ENCODE measurements at regions of chr1 and their contacts with region 1.

Region 1: GRCh38 chr1:70745199-70745598 is 302.4 kb downstream of the PTGER3 start:
- DNase-seq: no peak
- H3K4me3 ChIP-seq: no peak overlapping the region
- H3K27ac ChIP-seq: no peak overlapping the region
- H3K4me1 ChIP-seq: no peaks in the 10 kb centered on the region
- H3K27me3 ChIP-seq: no peaks in the 10 kb centered on the region
- CTCF ChIP-seq: peak; percentile 1 to 69 (median 51)
- EP300 ChIP-seq: no peak
- POLR2A ChIP-seq: no peak
- RAD21 ChIP-seq: peak; percentile 60 to 68

Region 2: DNA sequence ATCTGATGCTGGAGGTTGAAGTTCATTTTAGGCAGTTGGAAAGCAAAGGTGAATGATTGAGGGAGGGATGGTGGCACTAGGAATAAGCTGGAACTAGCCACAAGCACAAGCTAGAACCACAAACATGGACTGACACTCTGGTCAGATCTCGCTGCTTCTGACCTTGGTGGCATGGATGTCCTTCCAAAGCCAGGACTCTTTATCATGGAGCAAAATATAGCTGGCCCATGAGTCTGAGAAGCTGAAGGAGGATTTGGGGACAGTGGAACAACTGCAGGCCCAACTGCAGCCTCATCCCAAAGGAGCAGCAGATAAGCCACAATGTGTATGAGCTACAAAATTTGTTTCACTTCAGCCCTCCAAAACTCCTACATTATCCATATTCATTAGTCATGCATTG is 488.5 kb before region 1 on chr1:
- CTCF ChIA-PET with region 1: no interaction called
- POLR2A ChIA-PET with region 1: no interaction called
- DNase-seq: no peak
- H3K4me3 ChIP-seq: no peak overlapping the region
- H3K27ac ChIP-seq: no peak overlapping the region
- H3K4me1 ChIP-seq: no peaks in the 10 kb centered on the region
- H3K27me3 ChIP-seq: no peaks in the 10 kb centered on the region
- CTCF ChIP-seq: no peak
- EP300 ChIP-seq: no peak
- POLR2A ChIP-seq: no peak
- RAD21 ChIP-seq: no peak

Region 3: GRCh38 chr1:70542856-70543255 is 202.3 kb before region 1 on chr1:
- CTCF ChIA-PET with region 1: no interaction called
- POLR2A ChIA-PET with region 1: no interaction called
- DNase-seq: no peak
- H3K4me3 ChIP-seq: no peak overlapping the region
- H3K27ac ChIP-seq: no peak overlapping the region
- H3K4me1 ChIP-seq: peaks cover 0 to 4% (median 2%) of the 10 kb centered on the region in 4 experiments; a peak in 1 of 7 replicates
- H3K27me3 ChIP-seq: no peaks in the 10 kb centered on the region
- CTCF ChIP-seq: no peak
- EP300 ChIP-seq: no peak
- POLR2A ChIP-seq: no peak
- RAD21 ChIP-seq: no peak

Region 4: DNA sequence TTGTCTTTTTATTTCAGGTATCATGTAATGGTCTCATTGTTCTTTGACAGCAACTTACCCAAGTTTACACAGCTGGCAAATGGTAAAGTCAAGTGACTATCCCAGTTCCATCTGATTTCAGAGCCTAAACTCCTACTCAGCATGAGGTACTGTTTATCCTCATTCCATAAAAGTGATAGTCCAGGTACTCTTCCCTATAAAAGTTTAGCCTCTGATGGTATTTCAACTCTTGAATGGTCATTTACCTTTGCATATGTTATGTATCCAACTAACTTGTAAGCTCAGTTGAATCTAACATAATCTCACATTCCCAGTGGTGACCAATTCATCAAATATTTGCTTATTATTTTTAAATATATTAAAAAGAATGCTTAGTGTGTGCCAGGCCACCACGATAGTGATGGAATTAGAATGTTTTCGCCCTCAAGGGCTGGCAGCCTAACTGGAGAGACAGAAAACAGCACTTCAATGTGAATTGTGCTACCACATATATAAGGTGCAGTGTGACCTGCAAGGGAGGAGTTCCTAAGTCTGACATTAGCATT is 27.0 kb before region 1 on chr1:
- CTCF ChIA-PET with region 1: interaction called, 13 read pairs
- POLR2A ChIA-PET with region 1: no interaction called
- DNase-seq: no peak
- H3K4me3 ChIP-seq: no peak overlapping the region
- H3K27ac ChIP-seq: no peak overlapping the region
- H3K4me1 ChIP-seq: 0 out of 7 replicates have a peak, but pooled peaks cover 0 to 2% (median 0%) of the 10 kb centered on the region in 4 experiments
- H3K27me3 ChIP-seq: no peaks in the 10 kb centered on the region
- CTCF ChIP-seq: no peak
- EP300 ChIP-seq: no peak
- POLR2A ChIP-seq: no peak
- RAD21 ChIP-seq: no peak

Region 5: GRCh38 chr1:70727886-70728489 is 17.2 kb before region 1 on chr1:
- CTCF ChIA-PET with region 1: interaction called, 21 read pairs
- POLR2A ChIA-PET with region 1: no interaction called
- DNase-seq: peak in 1 of 2 experiments; percentile 48
- H3K4me3 ChIP-seq: no peak overlapping the region
- H3K27ac ChIP-seq: no peak overlapping the region
- H3K4me1 ChIP-seq: peaks cover 0 to 7% (median under 1%) of the 10 kb centered on the region in 4 experiments; a peak in 1 of 7 replicates
- H3K27me3 ChIP-seq: no peaks in the 10 kb centered on the region
- CTCF ChIP-seq: no peak
- EP300 ChIP-seq: no peak
- POLR2A ChIP-seq: no peak
- RAD21 ChIP-seq: no peak; a peak in 1 of 4 replicates

Measured in H1 (cell line).